ENCODE measurements at regions of chr1 and their contacts with region 1.

Region 1: DNA sequence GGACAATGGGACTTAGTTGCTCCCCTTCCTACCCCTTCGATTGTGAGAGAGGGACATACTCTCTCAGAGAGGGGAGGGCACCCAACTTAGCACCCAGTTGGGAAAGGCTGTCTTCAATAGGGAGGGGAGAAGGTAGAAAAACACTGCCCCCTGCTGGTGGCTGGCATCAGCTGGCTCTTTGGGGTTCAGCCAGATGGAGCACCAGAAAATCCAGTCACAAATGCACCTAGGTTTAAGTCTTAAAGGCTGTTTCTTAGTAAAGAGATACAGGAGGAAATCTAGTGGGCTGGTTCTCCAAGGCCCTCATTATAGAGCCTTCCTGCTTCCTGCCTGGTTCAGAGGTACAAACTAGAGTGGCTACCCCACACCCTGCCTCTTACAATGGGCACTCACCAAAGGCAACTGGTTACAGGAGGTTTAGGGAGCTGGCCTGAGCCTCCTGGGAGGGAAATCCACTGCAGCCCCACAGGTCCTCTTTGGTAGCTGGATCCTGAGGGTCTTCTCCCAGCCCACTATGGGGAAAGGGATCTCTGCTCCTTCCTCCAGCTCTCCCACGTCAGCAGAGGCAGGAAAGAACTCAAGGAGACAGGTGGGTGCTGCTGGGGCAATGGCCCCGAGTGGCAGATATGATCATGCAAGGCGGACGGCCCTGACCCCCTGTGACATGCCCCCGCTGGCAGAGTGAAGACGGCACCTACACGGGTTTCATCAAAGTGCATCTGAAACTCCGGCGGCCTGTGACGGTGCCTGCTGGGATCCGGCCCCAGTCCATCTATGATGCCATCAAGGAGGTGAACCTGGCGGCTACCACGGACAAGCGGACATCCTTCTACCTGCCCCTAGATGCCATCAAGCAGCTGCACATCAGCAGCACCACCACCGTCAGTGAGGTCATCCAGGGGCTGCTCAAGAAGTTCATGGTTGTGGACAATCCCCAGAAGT is 28.3 kb downstream of the EIF2D start:
- DNase-seq: peak; percentile 71
- CTCF ChIP-seq: peak; percentile 93

Region 2: GRCh38 chr1:206479183-206480125 is 104.5 kb before region 1 on chr1:
- in situ Hi-C with region 1: no loop called
- DNase-seq: peak; percentile 88
- CTCF ChIP-seq: peak; percentile 74

Region 3: DNA sequence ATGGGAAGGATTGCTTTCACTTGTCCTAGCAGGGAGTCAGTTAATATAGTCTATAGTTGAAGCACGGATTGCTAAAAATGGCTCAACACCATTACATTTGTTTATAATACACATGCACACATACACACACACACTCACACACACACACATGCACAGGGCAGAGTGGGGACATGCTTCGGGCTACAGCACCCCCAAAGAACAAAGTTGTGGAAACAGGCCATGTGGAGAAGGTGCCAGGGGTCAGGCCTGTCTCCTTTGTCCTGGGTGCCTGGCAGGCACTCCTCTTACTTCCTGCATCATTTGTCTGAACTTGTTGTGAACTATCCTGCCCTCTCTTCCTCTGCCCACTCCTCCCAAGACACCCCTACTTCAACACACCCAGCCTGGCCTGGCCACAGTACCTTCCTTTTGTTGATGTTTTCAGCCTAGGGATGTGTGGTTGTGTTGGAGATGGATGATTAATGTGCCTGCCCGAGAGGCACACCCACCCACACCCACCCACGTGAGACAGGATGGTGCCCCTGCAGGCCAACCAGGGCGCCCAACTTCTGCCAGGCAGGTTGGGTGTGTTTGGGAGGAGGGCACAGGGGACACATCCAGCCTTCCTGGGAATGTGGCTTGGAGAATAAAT is 59.1 kb before region 1 on chr1:
- in situ Hi-C with region 1: no loop called
- DNase-seq: no peak
- CTCF ChIP-seq: no peak

Region 4: DNA sequence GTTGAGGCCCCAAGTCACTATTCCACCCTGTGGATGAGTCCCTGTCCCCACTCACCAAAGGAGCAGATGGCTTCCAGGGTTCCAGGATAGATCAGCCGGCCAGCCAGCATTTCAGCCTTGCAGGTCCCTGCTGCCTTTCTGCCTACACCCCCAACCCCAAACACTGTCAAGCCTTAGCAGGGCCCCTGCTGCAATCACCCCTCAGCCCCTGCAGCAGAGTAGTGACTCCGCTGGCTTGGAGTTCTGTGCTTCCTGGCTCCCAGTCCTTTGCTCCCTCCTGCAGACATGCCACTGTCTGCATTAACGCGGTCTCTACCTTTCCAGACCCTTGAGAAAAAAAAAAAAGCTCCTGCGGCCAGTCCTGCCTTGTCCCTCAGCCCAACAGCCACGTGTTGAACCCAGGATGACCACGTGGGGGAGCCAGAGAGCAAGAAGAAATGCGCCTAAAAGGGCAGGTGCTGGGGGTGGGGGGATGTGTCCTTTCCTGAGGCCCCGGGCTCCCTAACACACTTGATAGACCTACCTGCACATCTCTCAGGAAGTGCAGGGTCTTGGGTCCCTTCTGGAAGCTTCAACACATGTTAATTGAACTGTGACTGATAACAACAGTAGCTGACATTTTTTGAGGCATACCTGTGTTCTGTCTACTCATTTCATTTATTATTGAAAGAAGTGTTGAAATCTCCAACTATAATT is 39.3 kb before region 1 on chr1:
- in situ Hi-C with region 1: loop called (anchors 5 kb)
- DNase-seq: peak; percentile 81
- CTCF ChIP-seq: peak; percentile 89

Region 5: DNA sequence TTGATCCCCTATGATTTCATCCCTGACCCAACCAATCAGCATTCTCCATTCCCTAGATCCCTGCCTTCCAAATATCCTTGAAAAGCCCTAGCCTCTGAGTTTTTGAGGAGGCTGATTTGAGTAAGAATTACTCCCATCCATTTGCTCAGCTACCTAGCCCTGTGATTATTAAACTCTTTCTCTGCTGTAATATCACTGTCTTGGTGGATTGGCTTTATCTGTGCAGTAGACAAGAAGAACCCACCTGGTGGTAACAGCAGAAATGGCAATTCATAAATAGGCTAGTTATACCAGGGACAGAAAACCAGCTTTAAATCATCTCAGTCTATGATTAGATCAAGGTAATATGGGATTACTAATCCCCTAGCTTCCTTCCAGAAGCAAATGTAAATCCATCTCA is 294.5 kb after region 1 on chr1:
- in situ Hi-C with region 1: no loop called
- DNase-seq: no peak
- CTCF ChIP-seq: peak; percentile 12

Measured in GM13977 (cell line).